ENCODE measurements at regions of chr5 and their contacts with region 1.

Region 1: GRCh38 chr5:181159286-181159829 is 12.0 kb downstream of the OR2V2 start:
- DNase-seq: peak; percentile 60
- ATAC-seq: peak; percentile 89
- H3K4me3 ChIP-seq: no peak overlapping the region
- H3K27ac ChIP-seq: no peak overlapping the region
- H3K4me1 ChIP-seq: peaks cover 4% of the 10 kb centered on the region
- H3K27me3 ChIP-seq: peaks cover 4% of the 10 kb centered on the region
- CTCF ChIP-seq: peak; percentile 93
- POLR2A ChIP-seq: no peak
- RAD21 ChIP-seq: peak; percentile 92

Region 2: GRCh38 chr5:180868960-180869359 is 290.4 kb before region 1 on chr5:
- CTCF ChIA-PET with region 1: no interaction called
- POLR2A ChIA-PET with region 1: no interaction called
- dilution Hi-C with region 1: no loop called
- in situ Hi-C with region 1: loop called (anchors 10 kb)
- intact Hi-C with region 1: loop called (anchors 5 kb)
- DNase-seq: peak; percentile 68
- ATAC-seq: peak; percentile 90
- H3K4me3 ChIP-seq: no peak overlapping the region
- H3K27ac ChIP-seq: no peak overlapping the region
- H3K4me1 ChIP-seq: no peaks in the 10 kb centered on the region
- H3K27me3 ChIP-seq: no peaks in the 10 kb centered on the region; the same call in 1 of the 2 replicates
- CTCF ChIP-seq: peak; percentile 77
- POLR2A ChIP-seq: no peak
- RAD21 ChIP-seq: peak; percentile 61

Region 3: GRCh38 chr5:180885872-180886418 is 273.4 kb before region 1 on chr5:
- CTCF ChIA-PET with region 1: no interaction called
- POLR2A ChIA-PET with region 1: no interaction called
- dilution Hi-C with region 1: no loop called
- in situ Hi-C with region 1: no loop called
- intact Hi-C with region 1: no loop called
- DNase-seq: no peak
- ATAC-seq: no peak
- H3K4me3 ChIP-seq: no peak overlapping the region
- H3K27ac ChIP-seq: no peak overlapping the region
- H3K4me1 ChIP-seq: no peaks in the 10 kb centered on the region
- H3K27me3 ChIP-seq: no peaks in the 10 kb centered on the region
- CTCF ChIP-seq: no peak
- POLR2A ChIP-seq: no peak
- RAD21 ChIP-seq: no peak

Region 4: GRCh38 chr5:181100121-181101015 is 59.0 kb before region 1 on chr5:
- CTCF ChIA-PET with region 1: no interaction called
- POLR2A ChIA-PET with region 1: no interaction called
- dilution Hi-C with region 1: no loop called
- in situ Hi-C with region 1: no loop called
- intact Hi-C with region 1: no loop called
- DNase-seq: no peak
- ATAC-seq: no peak
- H3K4me3 ChIP-seq: peak overlapping the region; percentile 36; the same call in 1 of the 2 replicates
- H3K27ac ChIP-seq: no peak overlapping the region
- H3K4me1 ChIP-seq: 0 out of 2 replicates have a peak, but pooled peaks cover 2% of the 10 kb centered on the region
- H3K27me3 ChIP-seq: peaks cover 16% of the 10 kb centered on the region; the same call in 1 of the 2 replicates
- CTCF ChIP-seq: no peak
- POLR2A ChIP-seq: no peak
- RAD21 ChIP-seq: no peak

Region 5: DNA sequence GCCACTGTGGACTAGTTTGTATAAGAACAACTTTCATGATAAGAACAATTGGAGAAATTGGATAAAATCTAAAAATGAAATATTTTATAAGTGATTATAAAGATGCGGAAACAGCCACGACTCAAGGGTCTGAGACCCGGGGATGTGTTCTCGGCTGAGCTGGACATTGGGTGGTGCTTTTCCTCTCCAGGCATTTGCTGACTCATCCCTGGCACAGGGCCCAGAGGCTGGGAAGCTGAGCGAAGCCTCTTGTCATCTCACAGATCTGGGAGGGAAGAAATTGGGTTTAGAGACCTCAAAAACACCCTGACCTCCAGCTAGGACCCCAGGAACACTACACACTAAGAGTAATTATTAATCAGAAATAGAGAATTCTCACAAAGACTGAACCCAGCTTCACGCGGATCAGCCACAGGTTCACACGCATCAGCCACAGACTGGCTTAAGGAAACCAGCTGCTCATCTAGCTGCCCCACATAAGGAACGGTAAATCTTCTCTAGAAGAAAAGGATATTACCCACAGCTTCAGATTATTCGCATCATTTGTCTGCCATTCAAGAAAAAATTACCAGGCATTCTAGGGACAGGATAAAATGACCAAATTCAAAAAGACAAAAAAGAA is 25.6 kb before region 1 on chr5:
- CTCF ChIA-PET with region 1: no interaction called
- POLR2A ChIA-PET with region 1: no interaction called
- dilution Hi-C with region 1: no loop called
- in situ Hi-C with region 1: no loop called
- intact Hi-C with region 1: no loop called
- DNase-seq: peak; percentile 51
- ATAC-seq: peak; percentile 46
- H3K4me3 ChIP-seq: no peak overlapping the region
- H3K27ac ChIP-seq: no peak overlapping the region
- H3K4me1 ChIP-seq: no peaks in the 10 kb centered on the region
- H3K27me3 ChIP-seq: peaks cover 4% of the 10 kb centered on the region; the same call in 1 of the 2 replicates
- CTCF ChIP-seq: no peak
- POLR2A ChIP-seq: no peak
- RAD21 ChIP-seq: no peak

Region 6: GRCh38 chr5:181181650-181182565 is 22.6 kb after region 1 on chr5:
- CTCF ChIA-PET with region 1: no interaction called
- POLR2A ChIA-PET with region 1: no interaction called
- dilution Hi-C with region 1: no loop called
- in situ Hi-C with region 1: no loop called
- intact Hi-C with region 1: loop called (anchors 1 kb)
- DNase-seq: peak; percentile 65
- ATAC-seq: peak; percentile 69
- H3K4me3 ChIP-seq: no peak overlapping the region
- H3K27ac ChIP-seq: no peak overlapping the region
- H3K4me1 ChIP-seq: no peaks in the 10 kb centered on the region
- H3K27me3 ChIP-seq: no peaks in the 10 kb centered on the region
- CTCF ChIP-seq: peak; percentile 80
- POLR2A ChIP-seq: no peak
- RAD21 ChIP-seq: peak; percentile 79

Measured in IMR-90 (cell line).